Calu3 (cell line): ENCODE measurements at regions of chr3 and their contacts with region 1.

Region 1: GRCh38 chr3:175212896-175213295 is 353.8 kb downstream of the NAALADL2 start:
- DNase-seq: peak; percentile 20
- H3K4me3 Mint-ChIP-seq: no peak overlapping the region
- H3K27ac Mint-ChIP-seq: peak overlapping the region; percentile 45
- H3K4me1 Mint-ChIP-seq: peaks cover 24% of the 10 kb centered on the region
- H3K27me3 Mint-ChIP-seq: no peaks in the 10 kb centered on the region
- CTCF ChIP-seq: no peak

Region 2: DNA sequence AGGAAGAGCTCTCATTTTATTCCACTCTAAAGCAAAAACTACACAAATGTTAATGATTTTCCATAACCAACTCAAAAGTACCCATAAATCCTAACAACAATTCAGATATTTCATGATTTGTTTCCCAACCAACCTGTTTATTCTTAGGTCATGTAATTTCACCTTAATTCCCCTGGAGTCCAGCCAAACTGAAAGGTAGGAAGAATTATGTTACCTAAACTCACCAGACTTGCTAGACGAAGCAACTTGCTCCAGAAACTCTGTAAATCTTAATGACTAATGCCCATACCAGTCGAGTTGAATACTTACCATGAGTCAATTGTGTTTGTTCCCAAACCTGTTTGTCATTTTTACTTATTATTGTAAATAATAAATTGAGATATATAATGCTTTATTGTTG is 954.3 kb after region 1 on chr3:
- CTCF ChIA-PET with region 1: no interaction called
- intact Hi-C with region 1: loop called (anchors 5 kb)
- DNase-seq: peak; percentile 78
- H3K4me3 Mint-ChIP-seq: peak overlapping the region; percentile 15
- H3K27ac Mint-ChIP-seq: peak overlapping the region; percentile 86
- H3K4me1 Mint-ChIP-seq: peaks cover 28% of the 10 kb centered on the region
- H3K27me3 Mint-ChIP-seq: no peaks in the 10 kb centered on the region
- CTCF ChIP-seq: no peak